Esophagus muscularis mucosa (tissue), 4 donors: ENCODE measurements at regions of chr10 and their contacts with region 1.

Region 1: DNA sequence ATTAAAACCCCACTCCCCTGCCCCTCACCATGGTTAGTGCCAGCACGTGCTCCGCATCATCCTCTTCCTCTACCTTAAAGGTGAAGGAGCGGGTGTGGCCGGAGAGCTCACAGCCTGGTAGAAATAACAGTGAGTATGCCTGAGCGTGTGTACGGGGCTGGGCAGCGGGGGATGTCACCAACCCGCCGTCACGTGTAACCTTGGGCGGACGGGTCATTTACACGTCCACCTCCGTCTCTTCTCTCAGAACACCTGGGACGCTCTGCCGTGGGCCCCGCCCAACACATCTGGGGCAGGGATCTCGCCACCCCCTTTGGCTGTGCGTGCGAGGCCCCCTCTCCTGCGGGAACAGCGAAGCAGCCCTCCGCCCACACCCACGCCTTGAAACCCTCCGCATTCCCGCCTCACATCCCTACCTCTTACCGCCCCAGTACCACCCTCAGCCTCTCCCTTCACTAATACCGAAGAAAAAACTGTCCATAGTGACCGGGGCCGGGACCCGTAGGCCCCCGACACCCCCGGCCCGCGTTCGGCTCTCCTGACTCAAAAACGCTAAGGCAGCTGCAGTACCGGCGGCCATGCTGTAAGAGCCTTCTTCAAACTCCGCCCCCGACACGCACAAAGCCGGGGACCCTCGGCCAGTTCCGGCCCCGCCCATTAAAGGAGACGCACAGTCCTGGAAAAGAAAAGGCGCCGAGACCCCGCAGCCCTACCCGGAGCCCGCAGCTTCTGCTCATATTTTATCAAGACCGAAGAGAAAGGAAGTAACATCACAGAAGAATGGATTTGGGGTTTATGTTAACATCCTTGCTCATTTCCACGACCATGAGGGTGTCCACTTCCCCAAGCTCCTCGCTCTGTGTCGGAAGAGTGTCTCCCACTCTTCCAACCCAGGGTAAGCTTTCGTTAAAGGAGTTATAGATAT is at the start of gene NPM3:
- DNase-seq: peak; percentile 97
- H3K4me3 ChIP-seq: peak within 1 kb of the TSS; percentile 60 to 74 (median 64)
- H3K27ac ChIP-seq: peak within 1 kb of the TSS; percentile 32 to 69 (median 42)
- H3K4me1 ChIP-seq: peaks cover 42 to 66% (median 59%) of the 10 kb centered on the region in 4 donors
- H3K27me3 ChIP-seq: peaks cover 0 to 18% (median 10%) of the 10 kb centered on the region in 4 donors
- CTCF ChIP-seq: peak in 1 of 3 experiments; percentile 5
- EP300 ChIP-seq: no peak
- POLR2A ChIP-seq: no peak
- total RNA-seq, gene NPM3: 15.6 to 31.5 (median 16.5) TPM

Region 2: GRCh38 chr10:101609481-101609880 is 173.6 kb before region 1 on chr10:
- intact Hi-C with region 1: loop called (anchors 5 kb)
- DNase-seq: no peak
- H3K4me3 ChIP-seq: no peak overlapping the region
- H3K27ac ChIP-seq: no peak overlapping the region
- H3K4me1 ChIP-seq: peaks cover 0 to 3% (median 1%) of the 10 kb centered on the region in 4 donors
- H3K27me3 ChIP-seq: no peaks in the 10 kb centered on the region
- CTCF ChIP-seq: no peak
- EP300 ChIP-seq: no peak
- POLR2A ChIP-seq: no peak

Region 3: GRCh38 chr10:101818119-101818871 is 35.2 kb after region 1 on chr10 and contains the start of gene OGA:
- intact Hi-C with region 1: loop called (anchors 5 kb)
- DNase-seq: peak; percentile 99
- H3K4me3 ChIP-seq: peak within 1 kb of the TSS; percentile 73 to 99 (median 94)
- H3K27ac ChIP-seq: peak within 1 kb of the TSS; percentile 88 to 98 (median 96)
- H3K4me1 ChIP-seq: peaks cover 31 to 46% (median 41%) of the 10 kb centered on the region in 4 donors
- H3K27me3 ChIP-seq: no peaks in the 10 kb centered on the region
- CTCF ChIP-seq: peak in 1 of 3 experiments; percentile 32
- EP300 ChIP-seq: no peak
- POLR2A ChIP-seq: peak; percentile 99
- total RNA-seq, gene OGA: 85.4 to 131 (median 101) TPM

Region 4: GRCh38 chr10:102009801-102010425 is 226.8 kb after region 1 on chr10:
- intact Hi-C with region 1: loop called (anchors 5 kb)
- DNase-seq: no peak
- H3K4me3 ChIP-seq: no peak overlapping the region
- H3K27ac ChIP-seq: no peak overlapping the region
- H3K4me1 ChIP-seq: peaks cover 0 to 7% (median 5%) of the 10 kb centered on the region in 4 donors
- H3K27me3 ChIP-seq: no peaks in the 10 kb centered on the region
- CTCF ChIP-seq: peak; percentile 89 to 96 (median 95)
- EP300 ChIP-seq: no peak
- POLR2A ChIP-seq: no peak